ENCODE measurements at regions of chr11 and their contacts with region 1.

Region 1: GRCh38 chr11:122863704-122864326 is 18.7 kb upstream of the JHY start:
- DNase-seq: peak in 3 of 5 donors; percentile 39 to 75 (median 43)
- H3K4me3 ChIP-seq: no peak overlapping the region
- H3K27ac ChIP-seq: no peak overlapping the region
- H3K4me1 ChIP-seq: no peaks in the 10 kb centered on the region
- H3K27me3 ChIP-seq: no peaks in the 10 kb centered on the region
- CTCF ChIP-seq: peak; percentile 83

Region 2: DNA sequence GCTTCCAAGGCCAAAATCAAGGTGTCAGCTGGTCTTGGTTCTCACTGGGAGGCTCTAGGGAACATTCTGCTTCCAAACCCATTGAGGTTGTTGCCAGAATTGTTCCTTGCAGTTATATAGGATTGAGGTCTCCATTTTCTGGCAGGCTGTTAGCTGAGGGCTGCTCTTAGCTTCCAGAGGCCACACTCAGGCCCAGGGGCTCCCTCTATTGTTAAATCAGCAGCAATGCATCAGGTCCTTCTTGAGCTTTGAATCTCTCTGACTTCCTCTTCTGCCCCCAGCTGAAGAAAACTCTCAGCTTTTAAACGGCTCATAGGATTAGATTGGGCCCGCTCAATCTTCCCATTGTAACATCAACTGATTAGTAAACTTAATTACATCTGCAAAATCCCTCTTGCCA is 157.2 kb after region 1 on chr11:
- intact Hi-C with region 1: loop called (anchors 10 kb)
- DNase-seq: peak in 2 of 5 donors; percentile 29 to 45
- H3K4me3 ChIP-seq: no peak overlapping the region
- H3K27ac ChIP-seq: no peak overlapping the region
- H3K4me1 ChIP-seq: no peaks in the 10 kb centered on the region
- H3K27me3 ChIP-seq: no peaks in the 10 kb centered on the region
- CTCF ChIP-seq: peak; percentile 45